HepG2 (cell line): ENCODE measurements at regions of chr14 and their contacts with region 1.

Region 1: GRCh38 chr14:61719344-61720293 is 24.3 kb downstream of the HIF1A start:
- DNase-seq: no peak
- ATAC-seq: no peak
- H3K4me3 ChIP-seq: no peak overlapping the region
- H3K27ac ChIP-seq: no peak overlapping the region
- H3K4me1 ChIP-seq: peaks cover 48% of the 10 kb centered on the region
- H3K27me3 ChIP-seq: no peaks in the 10 kb centered on the region; a peak in 1 of 5 replicates
- CTCF ChIP-seq: no peak
- EP300 ChIP-seq: no peak
- POLR2A ChIP-seq: no peak
- RAD21 ChIP-seq: no peak

Region 2: GRCh38 chr14:61609191-61609843 is 110.3 kb before region 1 on chr14:
- CTCF ChIA-PET with region 1: no interaction called
- POLR2A ChIA-PET with region 1: no interaction called
- in situ Hi-C with region 1: no loop called
- intact Hi-C with region 1: loop called (anchors 5 kb)
- DNase-seq: peak; percentile 63
- ATAC-seq: peak; percentile 72
- H3K4me3 ChIP-seq: peak overlapping the region; percentile 29 to 59 (median 46)
- H3K27ac ChIP-seq: peak overlapping the region; percentile 43
- H3K4me1 ChIP-seq: peaks cover 39% of the 10 kb centered on the region
- H3K27me3 ChIP-seq: no peaks in the 10 kb centered on the region
- CTCF ChIP-seq: no peak
- EP300 ChIP-seq: no peak; a peak in 1 of 4 replicates
- POLR2A ChIP-seq: no peak
- RAD21 ChIP-seq: no peak

Region 3: DNA sequence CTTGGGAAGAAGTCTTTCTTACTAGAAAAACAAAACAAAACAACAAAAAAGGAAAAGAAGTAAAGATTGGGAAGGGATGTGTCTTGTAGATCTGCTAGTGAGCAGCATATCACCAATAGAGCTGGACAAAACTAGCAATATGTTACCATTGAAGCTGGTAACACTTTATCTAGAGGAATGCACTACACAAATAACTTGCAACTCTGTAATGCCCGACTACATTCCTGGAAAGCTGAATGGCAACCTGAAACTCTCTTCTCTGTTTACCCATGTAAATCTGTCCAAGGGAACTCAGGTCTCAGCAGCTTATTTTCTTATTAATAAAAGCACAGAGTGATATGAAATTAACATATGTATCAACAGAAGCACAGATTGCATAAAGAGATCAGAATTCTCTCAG is 701.2 kb after region 1 on chr14:
- CTCF ChIA-PET with region 1: no interaction called
- POLR2A ChIA-PET with region 1: no interaction called
- in situ Hi-C with region 1: no loop called
- intact Hi-C with region 1: no loop called
- DNase-seq: no peak
- ATAC-seq: no peak
- H3K4me3 ChIP-seq: no peak overlapping the region
- H3K27ac ChIP-seq: no peak overlapping the region
- H3K4me1 ChIP-seq: no peaks in the 10 kb centered on the region
- H3K27me3 ChIP-seq: no peaks in the 10 kb centered on the region
- CTCF ChIP-seq: no peak
- EP300 ChIP-seq: no peak
- POLR2A ChIP-seq: no peak
- RAD21 ChIP-seq: no peak